GM10248 (cell line): ENCODE measurements at regions of chr12 and their contacts with region 1.

Region 1: DNA sequence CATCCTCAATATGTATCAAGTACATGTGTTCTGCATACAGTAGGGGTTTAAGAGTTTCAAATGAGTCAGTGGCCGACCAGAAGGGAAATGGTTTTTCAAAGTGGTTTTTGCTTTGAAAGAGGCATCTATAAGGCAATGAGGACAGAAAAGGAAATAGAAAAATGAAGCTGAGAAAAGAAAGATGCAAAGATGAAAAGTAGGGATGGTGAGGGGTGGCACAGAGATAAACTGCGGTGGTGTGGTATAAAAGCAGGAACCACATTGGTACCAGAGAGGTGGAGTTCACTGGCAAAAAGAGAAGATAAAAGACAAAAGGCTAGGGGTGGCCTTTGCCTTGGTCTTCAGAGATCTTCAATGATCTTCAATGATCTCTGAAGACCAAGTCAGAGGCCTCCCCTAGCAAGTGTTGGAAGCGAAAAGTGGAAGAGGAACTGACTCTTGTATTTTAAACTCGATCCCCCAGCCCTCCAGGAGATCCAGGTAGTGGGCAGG is 144.0 kb upstream of the KRR1 start:
- DNase-seq: no peak
- CTCF ChIP-seq: no peak

Region 2: DNA sequence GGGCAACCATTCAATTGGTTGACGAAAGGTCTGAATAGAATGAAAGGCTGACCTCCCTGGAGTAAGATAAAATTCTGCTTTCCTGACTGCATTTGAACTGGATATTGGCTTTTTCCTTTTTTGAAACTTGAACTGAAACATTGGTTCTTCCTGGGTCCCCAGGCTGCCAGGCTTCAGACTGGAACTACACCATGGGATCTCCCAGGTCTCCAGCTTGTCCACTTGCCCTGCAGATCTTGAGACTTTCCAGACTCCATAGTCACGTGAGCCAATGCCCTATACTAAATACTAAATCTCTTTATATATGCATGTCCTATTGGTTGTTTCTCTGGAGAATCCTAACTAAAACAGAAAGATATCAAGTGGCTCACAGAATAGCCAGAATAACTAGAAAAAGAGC is 25.3 kb before region 1 on chr12:
- CTCF ChIA-PET with region 1: no interaction called
- POLR2A ChIA-PET with region 1: no interaction called
- DNase-seq: no peak
- CTCF ChIP-seq: no peak

Region 3: DNA sequence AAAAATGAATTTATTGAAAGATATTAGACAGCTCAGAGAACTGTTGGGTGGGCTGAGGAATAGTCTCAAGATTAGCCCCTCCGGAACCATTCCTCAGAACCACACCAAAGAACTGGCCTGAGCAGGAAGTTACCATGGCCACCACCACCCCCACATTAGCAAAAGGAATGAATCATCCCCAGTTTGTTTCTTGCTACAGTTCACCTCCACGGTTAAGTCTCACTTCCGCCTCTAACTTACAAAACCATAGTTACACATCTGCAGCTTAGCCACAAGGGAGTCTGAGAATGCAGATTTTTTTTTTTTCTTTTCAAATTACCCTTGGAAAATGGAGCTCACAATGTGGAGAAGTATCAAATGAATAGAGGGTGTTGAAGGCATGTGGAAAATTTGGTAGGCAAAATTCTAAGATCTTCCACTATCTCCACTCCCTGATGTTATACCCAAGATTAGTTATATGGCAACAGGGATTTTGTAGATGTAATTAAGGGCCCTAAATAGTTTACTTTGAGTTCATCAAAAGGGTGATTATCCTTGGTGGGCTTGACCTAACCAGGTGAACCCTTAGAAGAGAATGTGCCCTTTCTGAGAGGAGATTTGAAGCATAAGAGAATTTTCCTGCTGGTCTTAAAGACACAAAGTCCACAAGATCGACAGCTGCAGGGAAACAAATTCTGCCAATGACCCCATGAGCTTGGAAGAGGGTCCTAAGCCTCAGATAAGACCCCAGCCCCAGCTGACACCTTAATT is 14.2 kb before region 1 on chr12:
- CTCF ChIA-PET with region 1: interaction called, 10 read pairs
- POLR2A ChIA-PET with region 1: no interaction called
- DNase-seq: peak; percentile 70
- CTCF ChIP-seq: no peak

Region 4: GRCh38 chr12:75677522-75677921 is 22.2 kb after region 1 on chr12:
- CTCF ChIA-PET with region 1: no interaction called
- POLR2A ChIA-PET with region 1: no interaction called
- DNase-seq: no peak
- CTCF ChIP-seq: no peak